Activated B cell treated with CpG ODN at 0.5 μM for 24 hours (primary cell): ENCODE measurements at regions of chr5 and their contacts with region 1.

Region 1: GRCh38 chr5:108911055-108911454 is 163.4 kb downstream of the FER start:
- DNase-seq: no peak
- ATAC-seq: peak; percentile 61
- H3K4me3 Mint-ChIP-seq: peak overlapping the region; percentile 17
- H3K27ac Mint-ChIP-seq: peak overlapping the region; percentile 86
- H3K4me1 Mint-ChIP-seq: peaks cover 14% of the 10 kb centered on the region
- H3K27me3 Mint-ChIP-seq: no peaks in the 10 kb centered on the region
- CTCF ChIP-seq: no peak

Region 2: GRCh38 chr5:108858959-108859358 is 52.1 kb before region 1 on chr5:
- CTCF ChIA-PET with region 1: no interaction called
- POLR2A ChIA-PET with region 1: no interaction called
- intact Hi-C with region 1: loop called (anchors 5 kb)
- DNase-seq: no peak
- ATAC-seq: peak; percentile 90
- H3K4me3 Mint-ChIP-seq: peak overlapping the region; percentile 25
- H3K27ac Mint-ChIP-seq: no peak overlapping the region
- H3K4me1 Mint-ChIP-seq: peaks cover 13% of the 10 kb centered on the region
- H3K27me3 Mint-ChIP-seq: no peaks in the 10 kb centered on the region
- CTCF ChIP-seq: no peak

Region 3: GRCh38 chr5:109173036-109173794 is 262.2 kb after region 1 on chr5:
- CTCF ChIA-PET with region 1: no interaction called
- POLR2A ChIA-PET with region 1: no interaction called
- intact Hi-C with region 1: no loop called
- DNase-seq: no peak
- ATAC-seq: no peak
- H3K4me3 Mint-ChIP-seq: no peak overlapping the region
- H3K27ac Mint-ChIP-seq: no peak overlapping the region
- H3K4me1 Mint-ChIP-seq: no peaks in the 10 kb centered on the region
- H3K27me3 Mint-ChIP-seq: no peaks in the 10 kb centered on the region
- CTCF ChIP-seq: no peak